HAP-1 (cell line): ENCODE measurements at regions of chr10 and their contacts with region 1.

Region 1: GRCh38 chr10:68796605-68797004 is 30.7 kb upstream of the STOX1 start:
- DNase-seq: no peak
- H3K4me3 ChIP-seq: no peak overlapping the region
- H3K4me1 ChIP-seq: no peaks in the 10 kb centered on the region; the same call in 1 of the 2 replicates
- H3K27me3 ChIP-seq: no peaks in the 10 kb centered on the region

Region 2: GRCh38 chr10:68897336-68897741 is 100.7 kb after region 1 on chr10:
- in situ Hi-C with region 1: loop called (anchors 5 kb)
- DNase-seq: peak; percentile 68 to 70
- H3K4me3 ChIP-seq: no peak overlapping the region
- H3K4me1 ChIP-seq: peaks cover 6% of the 10 kb centered on the region
- H3K27me3 ChIP-seq: no peaks in the 10 kb centered on the region